Kidney (tissue), 22 donors: ENCODE measurements at regions of chr19 and their contacts with region 1.

Region 1: DNA sequence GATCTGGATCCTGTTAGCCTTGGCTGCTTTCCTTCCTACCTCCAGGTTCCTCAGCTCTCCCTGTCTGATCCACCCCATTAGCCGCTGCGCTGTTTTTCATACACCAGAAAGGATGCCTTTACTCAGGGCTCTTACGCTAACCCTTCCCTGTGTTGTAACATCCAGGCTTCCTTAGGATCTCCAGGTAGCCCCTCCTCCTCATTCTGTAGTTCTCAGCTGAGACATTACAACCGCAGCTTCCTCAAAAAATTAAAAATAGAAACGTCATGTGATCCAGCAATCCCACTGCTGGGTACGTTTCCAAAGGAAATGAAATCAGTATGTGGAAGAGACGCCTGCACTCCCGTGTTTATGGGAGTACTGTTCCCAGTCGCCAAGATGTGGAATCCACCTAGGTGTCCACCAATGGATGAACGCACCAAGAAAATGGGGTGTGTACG is 18.4 kb upstream of the MYADM start:
- DNase-seq: peak in 1 of 5 donors; percentile 26
- H3K4me3 ChIP-seq: no peak overlapping the region
- H3K27ac ChIP-seq: no peak overlapping the region
- H3K4me1 ChIP-seq: no peaks in the 10 kb centered on the region
- H3K27me3 ChIP-seq: no peaks in the 10 kb centered on the region
- CTCF ChIP-seq: no peak

Region 2: DNA sequence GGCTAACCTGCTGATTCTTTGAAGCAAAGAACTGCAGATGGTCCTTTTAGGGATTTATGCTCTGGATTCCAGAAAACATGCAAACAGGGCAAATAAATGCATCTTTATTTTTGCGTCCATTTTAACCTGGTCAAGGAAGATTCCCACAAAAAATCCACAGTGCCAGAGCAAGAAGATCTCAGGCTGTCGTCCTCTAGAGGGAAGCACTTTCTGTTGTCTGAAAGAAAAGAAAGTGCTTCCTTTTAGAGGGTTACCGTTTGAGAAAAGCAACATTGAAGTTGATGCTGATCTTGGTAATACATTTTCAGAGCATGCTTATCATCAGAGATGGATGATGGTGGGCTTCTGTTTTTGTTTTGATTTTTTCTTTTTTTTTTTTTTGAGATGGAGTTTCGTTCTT is 142.0 kb before region 1 on chr19:
- intact Hi-C with region 1: no loop called
- DNase-seq: no peak
- H3K4me3 ChIP-seq: no peak overlapping the region
- H3K27ac ChIP-seq: no peak overlapping the region
- H3K4me1 ChIP-seq: no peaks in the 10 kb centered on the region
- H3K27me3 ChIP-seq: no peaks in the 10 kb centered on the region
- CTCF ChIP-seq: no peak

Region 3: GRCh38 chr19:53958168-53958571 is 108.9 kb after region 1 on chr19:
- intact Hi-C with region 1: no loop called
- DNase-seq: peak in 1 of 5 donors; percentile 51
- H3K4me3 ChIP-seq: no peak overlapping the region
- H3K27ac ChIP-seq: no peak overlapping the region
- H3K4me1 ChIP-seq: no peaks in the 10 kb centered on the region
- H3K27me3 ChIP-seq: peaks cover 23% of the 10 kb centered on the region
- CTCF ChIP-seq: no peak

Region 4: GRCh38 chr19:54029930-54030490 is 180.8 kb after region 1 on chr19:
- intact Hi-C with region 1: loop called (anchors 10 kb)
- DNase-seq: peak in 4 of 5 donors; percentile 51 to 78 (median 58)
- H3K4me3 ChIP-seq: no peak overlapping the region
- H3K27ac ChIP-seq: no peak overlapping the region
- H3K4me1 ChIP-seq: no peaks in the 10 kb centered on the region
- H3K27me3 ChIP-seq: no peaks in the 10 kb centered on the region
- CTCF ChIP-seq: peak; percentile 43